SK-N-SH (cell line): ENCODE measurements at regions of chr11 and their contacts with region 1.

Region 1: DNA sequence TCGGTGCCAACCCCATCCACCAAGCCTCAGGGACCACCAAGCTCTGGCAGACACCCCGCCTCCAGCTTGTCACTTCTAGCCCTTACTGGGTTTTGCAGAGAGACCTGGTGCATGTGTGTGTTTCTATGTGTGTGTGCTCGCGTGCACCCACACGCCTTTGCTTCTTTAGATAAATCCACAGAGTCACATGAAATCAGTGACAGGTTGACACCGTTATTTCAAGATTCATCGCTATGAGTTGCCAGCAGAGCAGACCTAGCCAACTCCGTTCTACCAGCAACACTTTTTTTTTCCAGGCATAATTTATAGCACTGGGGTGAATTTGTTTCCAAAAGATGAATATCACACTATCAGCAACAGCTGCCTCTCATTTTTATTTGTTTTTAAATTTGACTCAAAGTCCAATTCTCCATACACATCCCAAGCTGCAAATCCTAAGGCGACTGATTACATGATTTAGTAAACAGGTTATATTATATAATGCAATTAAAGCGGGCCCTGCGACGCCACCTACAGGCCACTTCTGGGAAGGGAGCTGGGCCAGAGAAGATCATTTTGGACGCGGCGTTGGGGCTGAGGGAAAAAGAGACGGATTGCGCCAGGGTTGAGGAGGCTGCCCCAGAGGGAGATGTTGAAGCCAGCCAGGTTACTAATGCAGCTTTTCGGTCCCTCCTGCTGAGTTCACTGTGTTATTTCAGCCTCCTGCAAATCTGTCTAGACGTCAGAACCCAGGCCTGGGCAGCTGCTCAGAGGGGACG is 150.5 kb downstream of the FEZ1 start:
- DNase-seq: peak; percentile 84
- H3K4me3 ChIP-seq: no peak overlapping the region
- H3K27ac ChIP-seq: no peak overlapping the region
- H3K4me1 ChIP-seq: peaks cover 0 to 7% of the 10 kb centered on the region in 2 experiments; a peak in 1 of 4 replicates
- H3K27me3 ChIP-seq: no peaks in the 10 kb centered on the region
- CTCF ChIP-seq: peak; percentile 95
- EP300 ChIP-seq: peak in 1 of 2 experiments; percentile 20; a peak in 1 of 4 replicates
- RAD21 ChIP-seq: peak; percentile 69

Region 2: DNA sequence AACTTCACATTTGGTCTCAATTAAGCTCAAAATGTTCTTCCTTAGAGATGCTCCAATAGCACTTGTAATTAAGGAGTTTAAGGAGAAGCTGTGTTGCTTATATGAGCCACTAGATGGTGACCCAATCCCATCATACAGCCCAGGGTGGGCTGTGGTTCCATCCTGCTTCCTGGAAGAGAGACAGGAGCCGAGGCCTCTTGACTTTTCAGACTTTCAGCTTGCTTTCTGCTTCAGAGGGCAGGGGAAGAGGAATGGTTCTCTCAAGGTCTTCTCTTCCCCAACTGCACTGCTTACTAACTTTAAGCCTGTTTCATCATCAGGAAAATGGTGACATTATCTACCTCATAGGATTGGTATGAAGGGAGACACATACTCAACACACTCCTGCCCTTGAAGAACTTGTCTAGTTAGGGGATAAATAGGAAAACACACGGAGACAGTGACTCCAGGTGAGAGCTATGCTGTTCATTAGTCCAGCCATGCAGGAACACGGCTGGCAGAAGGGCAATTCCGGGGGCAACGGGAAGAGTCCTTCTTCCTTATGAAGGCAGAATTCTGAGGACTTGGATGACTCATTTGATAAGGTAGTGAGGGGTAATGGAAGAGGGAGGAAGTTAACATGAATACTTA is 254.2 kb before region 1 on chr11:
- CTCF ChIA-PET with region 1: interaction called, 90 read pairs
- POLR2A ChIA-PET with region 1: interaction called, 3 read pairs
- DNase-seq: peak; percentile 90
- H3K4me3 ChIP-seq: no peak overlapping the region; a peak in 1 of 4 replicates
- H3K27ac ChIP-seq: peak overlapping the region in 1 of 2 experiments; percentile 17; a peak in 1 of 4 replicates
- H3K4me1 ChIP-seq: peaks cover 4% of the 10 kb centered on the region in 2 experiments; a peak in 2 of 4 replicates
- H3K27me3 ChIP-seq: no peaks in the 10 kb centered on the region
- CTCF ChIP-seq: peak; percentile 79
- EP300 ChIP-seq: no peak
- RAD21 ChIP-seq: peak; percentile 96

Region 3: GRCh38 chr11:125164422-125165110 is 181.0 kb before region 1 on chr11 and contains the start of gene PKNOX2:
- CTCF ChIA-PET with region 1: interaction called, 66 read pairs
- POLR2A ChIA-PET with region 1: interaction called, 3 read pairs
- DNase-seq: peak; percentile 95
- H3K4me3 ChIP-seq: peak within 1 kb of the TSS; percentile 52 to 71
- H3K27ac ChIP-seq: no peak within 1 kb of the TSS
- H3K4me1 ChIP-seq: peaks cover 0 to 7% of the 10 kb centered on the region in 2 experiments; a peak in 1 of 4 replicates
- H3K27me3 ChIP-seq: peaks cover 6% of the 10 kb centered on the region
- CTCF ChIP-seq: peak; percentile 56
- EP300 ChIP-seq: no peak
- RAD21 ChIP-seq: peak; percentile 50
- polyA plus RNA-seq, gene PKNOX2: 0.02 TPM in 1 of 2 replicates, not detected in the other

Region 4: GRCh38 chr11:125308246-125308645 is 37.4 kb before region 1 on chr11:
- CTCF ChIA-PET with region 1: interaction called, 12 read pairs
- POLR2A ChIA-PET with region 1: no interaction called
- DNase-seq: no peak
- H3K4me3 ChIP-seq: no peak overlapping the region
- H3K27ac ChIP-seq: no peak overlapping the region
- H3K4me1 ChIP-seq: no peaks in the 10 kb centered on the region; a peak in 1 of 4 replicates
- H3K27me3 ChIP-seq: peaks cover 8% of the 10 kb centered on the region; the same call in 1 of the 2 replicates
- CTCF ChIP-seq: no peak
- EP300 ChIP-seq: no peak
- RAD21 ChIP-seq: no peak

Region 5: GRCh38 chr11:125358254-125358840 is 12.7 kb after region 1 on chr11:
- CTCF ChIA-PET with region 1: interaction called, 103 read pairs
- POLR2A ChIA-PET with region 1: no interaction called
- DNase-seq: no peak
- H3K4me3 ChIP-seq: no peak overlapping the region
- H3K27ac ChIP-seq: no peak overlapping the region
- H3K4me1 ChIP-seq: no peaks in the 10 kb centered on the region
- H3K27me3 ChIP-seq: no peaks in the 10 kb centered on the region
- CTCF ChIP-seq: no peak
- EP300 ChIP-seq: no peak
- RAD21 ChIP-seq: no peak

Region 6: GRCh38 chr11:125429166-125429707 is 83.6 kb after region 1 on chr11:
- CTCF ChIA-PET with region 1: interaction called, 18 read pairs
- POLR2A ChIA-PET with region 1: no interaction called
- DNase-seq: peak; percentile 74
- H3K4me3 ChIP-seq: no peak overlapping the region; a peak in 1 of 4 replicates
- H3K27ac ChIP-seq: no peak overlapping the region
- H3K4me1 ChIP-seq: peaks cover 0 to 4% of the 10 kb centered on the region in 2 experiments; a peak in 1 of 4 replicates
- H3K27me3 ChIP-seq: peaks cover 6% of the 10 kb centered on the region; the same call in 1 of the 2 replicates
- CTCF ChIP-seq: peak; percentile 71
- EP300 ChIP-seq: no peak
- RAD21 ChIP-seq: peak; percentile 78

Region 7: GRCh38 chr11:125494974-125495725 is 149.6 kb after region 1 on chr11:
- CTCF ChIA-PET with region 1: no interaction called
- POLR2A ChIA-PET with region 1: no interaction called
- DNase-seq: peak; percentile 76
- H3K4me3 ChIP-seq: peak overlapping the region; percentile 53 to 69
- H3K27ac ChIP-seq: no peak overlapping the region
- H3K4me1 ChIP-seq: peaks cover 0 to 9% of the 10 kb centered on the region in 2 experiments; a peak in 1 of 4 replicates
- H3K27me3 ChIP-seq: peaks cover 9% of the 10 kb centered on the region; the same call in 1 of the 2 replicates
- CTCF ChIP-seq: no peak
- EP300 ChIP-seq: no peak
- RAD21 ChIP-seq: no peak